Right ventricle myocardium inferior (tissue), 1 donor: ENCODE measurements at regions of chr11 and their contacts with region 1.

Region 1: DNA sequence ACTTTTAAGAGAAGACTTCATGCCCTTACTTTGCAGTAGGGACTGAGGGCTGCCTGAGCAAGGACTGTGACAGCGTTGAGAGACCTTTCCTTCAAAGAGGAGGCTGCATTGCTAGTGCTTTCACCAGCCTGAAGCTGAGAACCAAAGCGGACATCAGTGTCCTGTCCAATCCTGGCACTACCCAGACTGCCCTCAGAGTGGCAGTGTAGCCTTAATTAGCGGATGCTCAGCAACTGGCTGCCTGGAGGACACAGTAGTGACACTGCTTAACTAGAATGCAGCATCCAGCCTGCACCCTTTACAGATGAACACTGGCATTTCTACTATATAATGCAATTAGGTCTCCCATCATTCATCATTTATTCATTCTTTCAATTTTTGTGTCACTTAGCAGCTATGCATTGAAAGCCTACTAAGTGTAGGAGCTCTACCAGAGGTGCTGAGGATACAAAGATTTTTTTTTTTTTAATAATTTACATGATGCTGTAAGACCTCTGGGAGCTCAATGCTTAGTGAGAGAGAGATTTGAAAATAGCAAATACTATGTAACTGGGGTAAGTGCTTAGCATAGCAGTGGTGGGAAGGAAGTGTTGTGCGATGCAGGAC is 36.9 kb upstream of the SLC36A4 start:
- DNase-seq: peak; percentile 69
- ATAC-seq: peak; percentile 95

Region 2: GRCh38 chr11:93063100-93063499 is 171.6 kb before region 1 on chr11:
- intact Hi-C with region 1: no loop called
- DNase-seq: no peak
- ATAC-seq: no peak

Region 3: GRCh38 chr11:93487032-93487483 is 252.4 kb after region 1 on chr11:
- intact Hi-C with region 1: loop called (anchors 10 kb)
- DNase-seq: no peak
- ATAC-seq: peak; percentile 23

Region 4: GRCh38 chr11:93543292-93543977 is 308.7 kb after region 1 on chr11 and contains the start of gene SMCO4:
- intact Hi-C with region 1: loop called (anchors 1 kb)
- DNase-seq: peak; percentile 90
- ATAC-seq: peak; percentile 96
- total RNA-seq, gene SMCO4: 45.3 TPM

Region 5: DNA sequence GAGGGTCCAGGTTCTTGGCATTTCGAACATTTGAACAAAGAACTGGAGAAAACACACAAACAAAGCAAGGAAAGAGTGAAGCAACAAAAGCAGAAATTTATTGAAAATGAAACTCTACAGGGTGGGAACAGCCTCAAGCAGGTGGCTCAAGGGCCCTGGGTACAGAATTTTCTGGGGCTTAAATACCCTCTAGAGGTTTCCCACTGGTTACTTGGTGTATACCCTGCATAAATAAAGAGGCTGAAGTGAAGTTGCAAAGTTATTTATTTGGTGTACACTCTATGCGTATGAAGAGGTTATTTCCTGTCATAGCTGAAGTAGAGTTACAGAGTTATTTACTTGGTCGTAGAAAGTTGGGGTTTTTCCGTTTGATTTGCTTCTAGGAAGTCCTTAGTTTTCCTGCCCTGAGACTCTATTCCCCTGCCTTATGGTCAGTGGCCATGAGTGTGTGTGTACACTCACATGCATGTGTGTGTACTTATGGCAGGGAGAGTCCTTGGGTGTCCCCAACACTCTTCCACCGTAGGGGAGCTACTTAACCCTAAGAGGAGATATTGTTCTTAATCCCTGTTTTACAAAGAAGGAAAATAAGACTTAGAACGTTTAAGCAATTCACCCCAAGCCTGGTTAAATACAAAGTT is 314.1 kb after region 1 on chr11:
- intact Hi-C with region 1: loop called (anchors 1 kb)
- DNase-seq: no peak
- ATAC-seq: no peak

Region 6: DNA sequence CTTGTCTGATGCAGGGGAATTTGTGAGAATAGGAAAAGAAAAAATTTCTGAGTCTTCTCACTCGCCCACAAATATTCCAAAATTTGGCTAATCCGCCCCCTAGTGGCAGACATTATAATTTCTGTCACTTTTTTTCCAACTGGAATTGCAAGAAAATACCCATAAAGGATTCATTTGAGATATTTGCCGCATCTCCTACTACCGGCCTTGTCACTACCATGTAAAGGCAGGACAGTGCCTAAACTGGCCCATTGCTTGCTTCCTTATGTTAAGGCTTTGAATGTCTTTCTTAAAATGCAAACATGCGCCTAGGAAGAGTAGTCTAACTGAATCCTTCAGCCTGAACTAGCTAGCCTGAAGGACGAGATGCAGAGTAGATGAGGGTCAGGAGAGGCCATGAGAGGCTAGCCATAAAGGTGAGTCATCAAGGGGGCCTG is 417.5 kb after region 1 on chr11:
- intact Hi-C with region 1: loop called (anchors 1 kb)
- DNase-seq: no peak
- ATAC-seq: no peak